ENCODE measurements at regions of chr5 and their contacts with region 1.

Region 1: DNA sequence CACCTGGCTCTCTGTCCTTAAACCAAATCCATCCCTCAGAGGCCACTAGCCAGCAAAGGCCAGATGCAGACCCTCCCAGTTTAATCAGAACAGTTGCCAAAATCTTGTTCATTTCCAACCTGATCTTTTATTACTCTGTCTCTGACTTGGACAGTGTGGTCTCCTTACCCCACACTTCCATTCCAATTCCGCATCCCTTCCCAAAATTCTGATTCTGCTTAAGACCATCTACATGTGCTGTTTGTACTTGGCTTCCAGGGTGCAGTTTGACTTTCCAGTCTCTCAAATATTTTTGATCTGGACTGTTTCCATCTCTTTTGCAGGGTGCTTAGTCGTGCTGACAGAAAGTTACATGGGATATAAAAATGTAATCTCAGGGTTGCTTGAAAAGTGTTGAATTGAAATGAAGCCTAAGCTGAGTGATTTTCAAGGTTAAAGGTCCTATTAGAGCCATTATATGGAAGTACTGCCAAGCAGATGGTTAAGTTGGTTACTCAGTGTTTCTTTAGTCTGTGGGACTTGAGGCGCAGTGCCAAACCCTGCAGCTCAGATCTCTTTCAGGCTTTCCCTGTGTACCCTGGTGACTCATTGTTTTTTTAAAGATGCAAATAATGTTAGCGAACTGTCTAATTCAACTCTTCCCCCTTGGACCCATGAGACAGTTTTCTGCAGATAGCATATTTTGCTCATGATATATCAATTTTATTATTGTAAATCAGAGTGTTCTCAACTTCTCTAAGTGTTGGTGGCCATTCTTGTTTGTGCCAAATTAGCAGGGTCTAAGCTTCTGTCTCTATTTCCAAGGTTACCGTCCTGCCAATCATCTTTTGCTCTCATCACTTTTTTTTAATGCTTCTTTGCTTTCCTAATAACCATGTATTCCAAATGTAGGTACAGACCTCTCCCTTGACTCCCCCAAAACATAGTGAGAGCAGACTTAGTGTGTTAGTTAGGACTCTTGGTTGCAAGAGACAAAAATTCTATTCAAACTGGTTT is 18.2 kb upstream of the DCP2 start:
- DNase-seq: no peak
- H3K4me3 ChIP-seq: no peak overlapping the region
- H3K4me3 Mint-ChIP-seq: no peak overlapping the region
- H3K27ac ChIP-seq: no peak overlapping the region
- H3K27ac Mint-ChIP-seq: no peak overlapping the region
- H3K4me1 ChIP-seq: peaks cover 12% of the 10 kb centered on the region
- H3K4me1 Mint-ChIP-seq: peaks cover 2 to 8% (median 5%) of the 10 kb centered on the region in 4 donors
- H3K27me3 ChIP-seq: no peaks in the 10 kb centered on the region
- H3K27me3 Mint-ChIP-seq: peaks cover 0 to 1% of the 10 kb centered on the region in 2 donors

Region 2: GRCh38 chr5:112560371-112560770 is 398.0 kb before region 1 on chr5:
- CTCF ChIA-PET with region 1: no interaction called
- POLR2A ChIA-PET with region 1: no interaction called
- intact Hi-C with region 1: no loop called
- DNase-seq: no peak
- H3K4me3 ChIP-seq: no peak overlapping the region
- H3K4me3 Mint-ChIP-seq: no peak overlapping the region
- H3K27ac ChIP-seq: no peak overlapping the region
- H3K27ac Mint-ChIP-seq: no peak overlapping the region
- H3K4me1 ChIP-seq: no peaks in the 10 kb centered on the region
- H3K4me1 Mint-ChIP-seq: no peaks in the 10 kb centered on the region
- H3K27me3 ChIP-seq: no peaks in the 10 kb centered on the region
- H3K27me3 Mint-ChIP-seq: peaks cover 3 to 6% of the 10 kb centered on the region in 2 donors

Region 3: DNA sequence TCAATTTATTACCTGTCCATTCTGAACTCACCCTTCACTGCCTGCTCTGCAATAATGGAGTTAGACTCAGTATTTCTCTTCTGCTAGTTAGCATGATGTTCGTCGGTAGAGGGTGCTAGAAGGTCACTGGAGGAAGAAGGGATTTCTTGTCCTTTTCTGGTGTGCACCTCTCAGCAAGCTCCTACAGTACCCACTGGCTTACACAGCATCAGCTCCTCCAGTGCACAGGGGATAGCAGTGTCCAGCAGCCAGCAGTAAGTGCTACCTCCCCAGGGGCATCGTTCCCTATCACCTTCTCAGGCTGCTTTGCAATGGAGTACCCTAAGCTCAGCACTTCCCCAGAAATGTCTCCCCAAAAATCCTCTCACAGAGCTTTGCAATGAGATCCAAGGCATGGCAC is 266.6 kb before region 1 on chr5:
- CTCF ChIA-PET with region 1: interaction called, 3 read pairs
- POLR2A ChIA-PET with region 1: no interaction called
- intact Hi-C with region 1: loop called (anchors 5 kb)
- DNase-seq: peak in 2 of 5 donors; percentile 9
- H3K4me3 ChIP-seq: no peak overlapping the region
- H3K4me3 Mint-ChIP-seq: no peak overlapping the region
- H3K27ac ChIP-seq: no peak overlapping the region
- H3K27ac Mint-ChIP-seq: no peak overlapping the region
- H3K4me1 ChIP-seq: no peaks in the 10 kb centered on the region
- H3K4me1 Mint-ChIP-seq: no peaks in the 10 kb centered on the region
- H3K27me3 ChIP-seq: peaks cover 12% of the 10 kb centered on the region
- H3K27me3 Mint-ChIP-seq: peaks cover 19 to 42% of the 10 kb centered on the region in 2 donors

Region 4: GRCh38 chr5:112940670-112941069 is 17.7 kb before region 1 on chr5:
- CTCF ChIA-PET with region 1: no interaction called
- POLR2A ChIA-PET with region 1: no interaction called
- intact Hi-C with region 1: no loop called
- DNase-seq: no peak
- H3K4me3 ChIP-seq: no peak overlapping the region
- H3K4me3 Mint-ChIP-seq: no peak overlapping the region
- H3K27ac ChIP-seq: no peak overlapping the region
- H3K27ac Mint-ChIP-seq: no peak overlapping the region
- H3K4me1 ChIP-seq: no peaks in the 10 kb centered on the region
- H3K4me1 Mint-ChIP-seq: peaks cover under 1 to 6% (median 4%) of the 10 kb centered on the region in 4 donors
- H3K27me3 ChIP-seq: no peaks in the 10 kb centered on the region
- H3K27me3 Mint-ChIP-seq: no peaks in the 10 kb centered on the region

Region 5: GRCh38 chr5:113147101-113147508 is 188.7 kb after region 1 on chr5:
- CTCF ChIA-PET with region 1: no interaction called
- POLR2A ChIA-PET with region 1: no interaction called
- intact Hi-C with region 1: no loop called
- DNase-seq: no peak
- H3K4me3 ChIP-seq: no peak overlapping the region
- H3K4me3 Mint-ChIP-seq: no peak overlapping the region
- H3K27ac ChIP-seq: no peak overlapping the region
- H3K27ac Mint-ChIP-seq: no peak overlapping the region
- H3K4me1 ChIP-seq: no peaks in the 10 kb centered on the region
- H3K4me1 Mint-ChIP-seq: no peaks in the 10 kb centered on the region
- H3K27me3 ChIP-seq: no peaks in the 10 kb centered on the region
- H3K27me3 Mint-ChIP-seq: no peaks in the 10 kb centered on the region